ENCODE measurements at regions of chr7 and their contacts with region 1.

Region 1: GRCh38 chr7:1086588-1087464 is 1.1 kb upstream of the GPER1 start:
- DNase-seq: peak; percentile 53 to 92
- ATAC-seq: peak; percentile 87 to 91
- H3K4me3 ChIP-seq: peak overlapping the region; percentile 18; the same call in 1 of the 3 replicates
- H3K27ac ChIP-seq: peak overlapping the region; percentile 60 to 85
- H3K4me1 ChIP-seq: peaks cover 21% of the 10 kb centered on the region
- CTCF ChIP-seq: peak; percentile 94
- EP300 ChIP-seq: no peak
- POLR2A ChIP-seq: no peak
- RAD21 ChIP-seq: peak; percentile 53 to 61

Region 2: DNA sequence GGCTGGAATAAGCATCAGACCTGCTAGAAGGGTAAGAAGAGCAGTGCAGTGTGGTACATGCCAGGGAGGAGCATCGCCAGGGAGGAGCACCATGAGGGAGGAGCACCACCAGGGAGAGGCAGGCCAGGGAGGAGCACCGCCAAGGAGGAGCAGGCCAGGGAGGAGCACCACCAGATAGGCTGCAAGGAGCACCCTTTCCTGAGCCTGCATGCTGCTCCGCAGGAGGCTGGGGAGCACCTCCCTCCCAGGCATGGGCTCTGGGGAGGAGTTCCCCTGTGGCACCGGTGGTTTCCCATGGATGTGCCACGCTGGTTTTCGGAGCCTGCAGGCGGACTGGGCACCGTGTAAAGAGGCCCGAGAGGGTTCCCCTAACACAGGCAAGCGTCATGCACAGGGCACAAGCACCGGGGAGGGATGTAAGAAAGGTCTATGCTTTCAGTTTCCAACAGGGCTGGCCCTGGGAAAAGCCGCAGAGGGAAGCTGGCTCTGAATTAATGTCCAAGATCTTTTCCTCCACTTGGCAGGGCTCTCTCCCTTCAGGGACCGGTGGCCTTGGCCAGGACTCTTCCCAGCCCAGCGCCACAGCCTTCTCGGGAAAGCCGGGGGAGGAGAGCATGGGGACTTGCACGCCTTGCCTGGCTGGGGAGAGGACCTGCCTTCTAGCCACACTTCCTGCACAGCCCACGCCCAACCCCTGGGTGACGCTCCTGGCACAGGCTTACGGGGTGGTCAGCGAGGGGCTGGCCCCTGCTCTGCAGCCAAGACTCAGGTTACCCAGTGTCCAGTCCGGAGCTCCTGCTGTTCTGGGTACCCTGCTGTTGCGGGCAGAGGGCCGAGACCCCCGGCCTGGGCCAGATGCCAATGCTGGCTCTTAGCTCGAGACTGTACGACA is 10.4 kb before region 1 on chr7:
- CTCF ChIA-PET with region 1: interaction called, 11 read pairs
- POLR2A ChIA-PET with region 1: no interaction called
- DNase-seq: no peak
- ATAC-seq: peak in 1 of 2 experiments; percentile 17; a peak in 1 of 6 replicates
- H3K4me3 ChIP-seq: no peak overlapping the region
- H3K27ac ChIP-seq: no peak overlapping the region
- H3K4me1 ChIP-seq: no peaks in the 10 kb centered on the region
- CTCF ChIP-seq: no peak
- EP300 ChIP-seq: no peak
- POLR2A ChIP-seq: no peak
- RAD21 ChIP-seq: no peak

Region 3: GRCh38 chr7:1103009-1103788 is 16.4 kb after region 1 on chr7:
- CTCF ChIA-PET with region 1: interaction called, 102 read pairs
- POLR2A ChIA-PET with region 1: no interaction called
- DNase-seq: no peak
- ATAC-seq: no peak
- H3K4me3 ChIP-seq: no peak overlapping the region
- H3K27ac ChIP-seq: no peak overlapping the region
- H3K4me1 ChIP-seq: no peaks in the 10 kb centered on the region
- CTCF ChIP-seq: no peak
- EP300 ChIP-seq: no peak
- POLR2A ChIP-seq: no peak
- RAD21 ChIP-seq: no peak

Region 4: GRCh38 chr7:1159891-1160668 is 73.3 kb after region 1 on chr7 and contains the start of gene ZFAND2A:
- CTCF ChIA-PET with region 1: interaction called, 25 read pairs
- POLR2A ChIA-PET with region 1: no interaction called
- DNase-seq: peak; percentile 97 to 98
- ATAC-seq: peak; percentile 90 to 92
- H3K4me3 ChIP-seq: peak within 1 kb of the TSS; percentile 72
- H3K27ac ChIP-seq: peak within 1 kb of the TSS; percentile 94 to 98
- H3K4me1 ChIP-seq: peaks cover 42% of the 10 kb centered on the region
- CTCF ChIP-seq: no peak
- EP300 ChIP-seq: no peak
- POLR2A ChIP-seq: peak; percentile 57
- RAD21 ChIP-seq: no peak
- polyA plus RNA-seq, gene ZFAND2A: 88.6 and 105 TPM in 2 replicates

Region 5: DNA sequence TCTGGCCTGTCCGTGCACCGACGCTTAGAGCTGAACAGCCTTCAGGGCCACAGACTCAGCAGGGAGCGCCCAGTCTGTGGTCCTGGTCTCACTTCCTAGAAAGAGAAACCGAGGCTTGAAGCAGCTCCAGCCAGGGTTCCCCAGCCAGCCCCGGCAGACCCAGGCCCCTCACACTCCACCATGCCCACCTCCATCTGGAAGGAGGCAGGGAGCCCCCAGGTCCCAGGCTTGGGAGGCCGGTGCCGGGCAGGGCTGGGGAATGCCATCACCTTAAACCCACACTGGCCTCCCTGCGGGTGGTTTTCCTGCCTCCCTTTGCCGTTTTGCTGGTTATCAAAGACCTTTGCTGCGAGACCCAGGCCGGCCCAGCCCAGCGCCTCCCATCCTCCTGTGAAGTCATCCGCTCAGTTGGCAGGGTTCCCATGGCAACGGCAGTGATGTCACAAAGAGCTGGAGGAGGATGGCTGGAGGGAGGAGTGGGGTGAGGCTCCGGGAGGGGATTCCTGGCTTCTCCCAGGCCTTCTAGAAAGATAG is 607.2 kb after region 1 on chr7:
- CTCF ChIA-PET with region 1: no interaction called
- POLR2A ChIA-PET with region 1: no interaction called
- DNase-seq: peak in 1 of 2 experiments; percentile 50
- ATAC-seq: peak; percentile 22 to 49; a peak in 3 of 6 replicates
- H3K4me3 ChIP-seq: no peak overlapping the region
- H3K27ac ChIP-seq: no peak overlapping the region
- H3K4me1 ChIP-seq: no peaks in the 10 kb centered on the region
- CTCF ChIP-seq: no peak
- EP300 ChIP-seq: no peak
- POLR2A ChIP-seq: no peak
- RAD21 ChIP-seq: no peak

Measured in A549 (cell line).